Heart left ventricle (tissue), 16 donors: ENCODE measurements at regions of chr1 and their contacts with region 1.

Region 1: DNA sequence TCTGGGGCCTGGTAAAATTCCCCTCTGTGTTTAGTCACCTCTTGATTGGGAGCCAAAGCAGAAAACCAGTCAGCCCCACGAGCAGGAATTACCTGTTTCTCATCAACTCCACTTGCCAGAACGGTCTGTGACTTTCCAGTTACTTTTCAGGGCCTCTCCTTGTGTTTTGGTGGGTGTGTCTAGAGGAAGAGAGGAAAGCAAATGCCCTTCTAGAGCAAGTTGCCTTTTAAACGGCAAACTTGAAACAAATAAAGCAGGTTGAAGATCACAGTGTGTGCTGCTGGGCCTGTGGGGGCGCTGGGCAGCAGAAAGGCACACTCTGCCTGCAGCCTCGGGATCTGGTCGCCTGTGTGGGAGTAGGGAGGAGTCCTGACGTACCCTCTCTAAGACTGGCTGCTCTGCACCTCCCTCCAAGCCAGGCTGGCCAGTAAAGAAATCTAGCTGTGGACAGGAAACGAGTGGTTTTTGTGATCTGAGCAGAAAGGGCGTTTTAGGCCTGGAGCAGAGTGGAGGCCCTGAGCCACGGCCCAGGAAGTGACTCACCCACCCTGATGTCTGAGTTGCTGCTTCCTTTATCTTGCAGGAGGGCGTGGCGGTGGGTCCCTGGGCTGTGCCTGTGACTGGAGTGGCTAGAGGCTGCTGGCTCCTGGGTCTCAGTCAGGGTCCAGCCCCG is 11.1 kb upstream of the S100A11 start:
- DNase-seq: peak; percentile 87 to 94 (median 94)
- ATAC-seq: peak; percentile 94 to 97 (median 96)
- H3K4me3 ChIP-seq: peak overlapping the region in 9 of 12 donors; percentile 2 to 42 (median 25)
- H3K27ac ChIP-seq: peak overlapping the region; percentile 73 to 97 (median 86)
- H3K4me1 ChIP-seq: peaks cover 3 to 70% (median 17%) of the 10 kb centered on the region in 12 donors
- H3K27me3 ChIP-seq: peaks cover 0 to 2% (median 0%) of the 10 kb centered on the region in 9 donors
- CTCF ChIP-seq: peak in 11 of 12 donors; percentile 15 to 76 (median 47)
- POLR2A ChIP-seq: peak in 1 of 2 donors; percentile 69

Region 2: GRCh38 chr1:151881456-151881855 is 166.4 kb before region 1 on chr1:
- intact Hi-C with region 1: no loop called
- DNase-seq: no peak
- ATAC-seq: no peak
- H3K4me3 ChIP-seq: no peak overlapping the region
- H3K27ac ChIP-seq: no peak overlapping the region
- H3K4me1 ChIP-seq: no peaks in the 10 kb centered on the region
- H3K27me3 ChIP-seq: no peaks in the 10 kb centered on the region
- CTCF ChIP-seq: peak in 1 of 12 donors; percentile 10
- POLR2A ChIP-seq: no peak

Region 3: GRCh38 chr1:152078831-152079441 is 31.1 kb after region 1 on chr1:
- intact Hi-C with region 1: no loop called
- DNase-seq: peak in 1 of 5 donors; percentile 41
- ATAC-seq: no peak
- H3K4me3 ChIP-seq: no peak overlapping the region
- H3K27ac ChIP-seq: no peak overlapping the region
- H3K4me1 ChIP-seq: no peaks in the 10 kb centered on the region
- H3K27me3 ChIP-seq: peaks cover 0 to 22% (median 0%) of the 10 kb centered on the region in 9 donors
- CTCF ChIP-seq: no peak
- POLR2A ChIP-seq: no peak

Region 4: DNA sequence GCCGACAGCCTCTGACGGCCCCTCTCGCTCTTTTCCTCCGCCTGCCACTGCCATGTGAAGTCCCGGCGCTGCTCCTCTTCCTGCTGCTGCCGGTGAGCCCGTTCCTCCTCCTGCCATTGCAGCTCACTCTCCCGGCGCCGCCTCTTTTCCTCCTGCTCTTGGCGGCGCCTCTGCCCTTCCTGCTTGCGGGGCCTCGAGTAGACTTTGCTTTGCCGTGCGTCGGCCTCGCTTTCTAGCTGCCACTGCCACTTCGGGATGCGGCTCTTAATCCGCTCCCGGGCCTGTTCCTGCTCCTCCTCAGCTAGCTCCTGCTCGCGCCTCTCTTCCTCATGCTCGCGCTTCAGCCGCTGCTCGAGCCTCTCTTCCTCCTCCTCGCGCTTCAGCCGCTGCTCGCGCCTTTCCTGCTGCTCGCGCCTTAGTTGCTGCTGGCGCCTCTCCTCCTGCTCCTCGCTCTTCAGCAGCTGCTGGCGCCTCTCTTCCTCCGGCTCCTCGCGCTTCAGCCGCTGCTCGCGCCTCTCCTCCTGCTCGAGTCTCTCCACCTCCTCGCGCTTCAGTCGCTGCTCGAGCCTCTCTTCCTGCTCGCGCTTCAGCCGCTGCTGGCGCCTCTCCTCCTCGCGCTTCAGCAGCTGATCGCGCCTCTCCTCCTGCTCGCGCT is 63.1 kb after region 1 on chr1:
- intact Hi-C with region 1: loop called in 1 of 10 experiments (anchors 10 kb)
- DNase-seq: peak in 3 of 5 donors; percentile 7 to 68 (median 32)
- ATAC-seq: peak in 3 of 4 donors; percentile 34 to 57 (median 35)
- H3K4me3 ChIP-seq: peak overlapping the region; percentile 18 to 59 (median 46)
- H3K27ac ChIP-seq: no peak overlapping the region
- H3K4me1 ChIP-seq: peaks cover 5 to 49% (median 29%) of the 10 kb centered on the region in 12 donors
- H3K27me3 ChIP-seq: peaks cover 44 to 100% (median 80%) of the 10 kb centered on the region in 9 donors
- CTCF ChIP-seq: no peak
- POLR2A ChIP-seq: no peak

Region 5: DNA sequence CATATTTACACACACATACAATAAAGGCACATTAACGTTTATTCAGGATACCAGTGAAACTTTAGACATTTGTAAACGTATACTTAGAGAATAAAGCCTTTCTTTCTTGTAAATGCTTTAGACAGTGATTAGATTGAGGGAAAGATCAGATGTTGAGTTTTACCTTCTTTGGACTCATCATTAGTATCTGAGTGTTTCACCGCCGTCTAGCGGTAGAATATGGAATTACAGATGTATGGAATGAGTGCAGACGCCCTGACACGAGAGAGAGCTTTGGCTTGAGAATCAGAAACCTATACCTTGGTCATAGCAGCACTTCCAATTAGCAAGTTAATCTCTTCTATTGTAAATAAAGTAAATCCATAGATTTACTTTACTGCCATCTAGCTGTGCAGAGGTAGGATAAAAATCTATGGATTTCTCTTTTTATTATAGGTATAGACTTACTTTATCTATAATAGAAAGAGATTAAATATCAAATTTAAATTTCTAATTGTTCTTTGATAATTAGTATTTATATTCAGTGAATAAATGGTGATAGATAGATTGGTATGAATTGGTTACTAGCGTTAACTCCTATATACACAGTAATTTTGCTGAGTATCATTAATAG is 299.4 kb after region 1 on chr1:
- intact Hi-C with region 1: loop called in 1 of 10 experiments (anchors 10 kb)
- DNase-seq: peak in 1 of 5 donors; percentile 8
- ATAC-seq: no peak
- H3K4me3 ChIP-seq: no peak overlapping the region
- H3K27ac ChIP-seq: no peak overlapping the region
- H3K4me1 ChIP-seq: no peaks in the 10 kb centered on the region
- H3K27me3 ChIP-seq: no peaks in the 10 kb centered on the region
- CTCF ChIP-seq: peak; percentile 64 to 91 (median 74)
- POLR2A ChIP-seq: no peak

Region 6: DNA sequence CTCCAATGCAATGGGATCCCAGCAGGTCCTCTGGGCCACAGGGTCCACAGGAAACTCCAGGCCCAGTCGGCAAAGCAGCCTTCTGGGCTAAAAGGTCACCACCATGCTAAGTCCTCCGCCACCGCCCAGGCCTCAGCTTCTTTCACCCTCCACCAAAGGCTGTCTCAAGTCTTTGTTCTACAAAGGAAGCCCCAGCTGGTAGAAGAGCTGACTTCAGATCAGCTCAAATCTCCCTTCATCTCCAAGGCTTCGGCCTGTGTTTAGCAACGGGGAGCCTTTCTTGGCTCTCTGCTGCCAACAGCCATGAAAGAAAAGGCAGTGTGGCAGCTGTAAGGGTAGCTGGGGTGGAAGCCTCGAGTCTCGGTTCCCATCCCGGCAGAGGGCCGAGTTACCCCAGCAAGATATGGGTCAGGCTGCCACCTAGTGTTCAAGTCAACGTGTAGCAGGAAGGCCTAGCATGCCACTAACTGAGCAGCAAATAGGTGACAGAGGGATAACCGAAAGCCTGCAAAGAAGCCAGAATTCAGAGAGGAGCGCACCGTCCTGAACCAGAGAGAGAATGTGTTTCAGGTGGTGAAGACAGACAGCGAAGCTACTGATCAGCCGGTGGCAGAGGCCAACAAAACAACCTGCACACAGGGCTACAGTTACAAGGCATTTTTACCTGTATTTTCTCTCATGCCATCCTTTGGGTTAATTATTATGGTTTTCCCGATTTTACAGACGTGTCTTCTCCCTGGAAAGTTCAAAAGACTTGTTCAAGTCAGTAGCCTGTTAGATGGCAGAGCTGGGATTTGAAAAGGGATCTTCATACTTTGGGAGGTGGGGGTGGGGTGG is 393.0 kb after region 1 on chr1:
- intact Hi-C with region 1: loop called in 5 of 10 experiments (anchors 2 to 5 kb)
- DNase-seq: peak; percentile 60 to 73 (median 68)
- ATAC-seq: peak; percentile 66 to 90 (median 83)
- H3K4me3 ChIP-seq: no peak overlapping the region
- H3K27ac ChIP-seq: no peak overlapping the region
- H3K4me1 ChIP-seq: peaks cover 0 to 31% (median 11%) of the 10 kb centered on the region in 12 donors
- H3K27me3 ChIP-seq: peaks cover 0 to 19% (median 0%) of the 10 kb centered on the region in 9 donors
- CTCF ChIP-seq: peak; percentile 71 to 84 (median 80)
- POLR2A ChIP-seq: no peak

Region 7: GRCh38 chr1:152451254-152451653 is 403.4 kb after region 1 on chr1:
- intact Hi-C with region 1: loop called in 9 of 10 experiments (anchors 2 to 5 kb)
- DNase-seq: no peak
- ATAC-seq: no peak
- H3K4me3 ChIP-seq: no peak overlapping the region
- H3K27ac ChIP-seq: no peak overlapping the region
- H3K4me1 ChIP-seq: no peaks in the 10 kb centered on the region
- H3K27me3 ChIP-seq: peaks cover 0 to 4% (median 0%) of the 10 kb centered on the region in 9 donors
- CTCF ChIP-seq: peak in 2 of 12 donors; percentile 4 to 8
- POLR2A ChIP-seq: no peak

Region 8: DNA sequence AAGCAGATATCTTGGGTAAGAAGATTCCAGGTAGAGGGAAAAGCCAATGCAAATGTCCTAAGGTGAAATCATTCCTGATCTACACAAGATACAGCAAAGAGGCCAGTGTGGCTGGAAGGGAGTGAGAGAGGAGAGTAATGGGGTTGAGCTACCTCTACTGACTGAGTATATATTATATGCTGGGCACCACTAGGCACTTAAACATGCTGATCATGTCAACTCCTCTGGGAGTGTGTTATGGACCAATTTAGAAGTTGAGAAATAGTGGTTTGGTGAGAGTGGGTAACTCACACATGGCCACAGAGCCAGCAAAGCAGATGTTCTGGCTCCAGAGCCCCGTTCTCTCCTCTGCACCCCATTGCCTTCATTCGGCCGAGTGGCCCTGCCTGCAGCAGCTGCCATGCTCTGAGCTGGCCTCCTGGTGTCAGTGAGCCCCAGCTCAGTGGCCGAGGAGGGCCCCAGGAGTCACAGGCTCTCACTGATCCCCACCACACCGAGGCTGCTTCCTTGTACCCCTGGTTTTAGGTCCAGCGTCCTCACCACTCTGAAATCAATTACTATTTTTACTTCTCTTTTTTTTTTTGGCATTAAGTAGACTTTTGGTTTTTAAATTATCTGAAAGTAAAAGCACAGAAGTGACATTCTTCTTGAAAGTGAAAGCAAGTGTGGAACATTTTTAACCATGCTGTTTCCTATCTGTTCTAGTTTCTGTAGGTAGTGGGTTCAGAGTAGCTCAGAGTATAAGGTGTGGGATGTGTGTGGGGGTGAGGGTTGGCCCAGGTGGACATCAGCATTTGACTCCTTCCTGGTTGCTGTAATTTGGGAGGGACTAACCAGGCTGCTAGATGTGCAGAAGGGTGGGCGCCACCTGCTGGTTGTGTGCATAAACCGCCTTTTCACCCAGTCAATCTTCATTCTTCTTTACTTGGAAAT is 412.0 kb after region 1 on chr1:
- intact Hi-C with region 1: loop called in 9 of 10 experiments (anchors 2 to 5 kb)
- DNase-seq: peak; percentile 43 to 79 (median 61)
- ATAC-seq: peak in 3 of 4 donors; percentile 67 to 71 (median 70)
- H3K4me3 ChIP-seq: peak overlapping the region in 7 of 12 donors; percentile 6 to 19 (median 10)
- H3K27ac ChIP-seq: peak overlapping the region in 6 of 12 donors; percentile 7 to 60 (median 18)
- H3K4me1 ChIP-seq: peaks cover 0 to 13% (median 2%) of the 10 kb centered on the region in 12 donors
- H3K27me3 ChIP-seq: peaks cover 0 to 7% (median 0%) of the 10 kb centered on the region in 9 donors
- CTCF ChIP-seq: peak; percentile 61 to 85 (median 76)
- POLR2A ChIP-seq: no peak